ENCODE measurements at regions of chr9 and their contacts with region 1.

Region 1: GRCh38 chr9:93154315-93154903 is 20.4 kb upstream of the NINJ1 start:
- DNase-seq: no peak
- H3K4me3 ChIP-seq: no peak overlapping the region
- H3K27ac ChIP-seq: no peak overlapping the region
- H3K4me1 ChIP-seq: no peaks in the 10 kb centered on the region
- H3K27me3 ChIP-seq: no peaks in the 10 kb centered on the region
- CTCF ChIP-seq: peak in 2 of 4 experiments; percentile 26 to 55
- EP300 ChIP-seq: no peak
- POLR2A ChIP-seq: no peak

Region 2: GRCh38 chr9:92970467-92970923 is 183.9 kb before region 1 on chr9:
- intact Hi-C with region 1: no loop called
- DNase-seq: no peak
- H3K4me3 ChIP-seq: no peak overlapping the region
- H3K27ac ChIP-seq: no peak overlapping the region
- H3K4me1 ChIP-seq: no peaks in the 10 kb centered on the region
- H3K27me3 ChIP-seq: no peaks in the 10 kb centered on the region
- CTCF ChIP-seq: no peak
- EP300 ChIP-seq: no peak
- POLR2A ChIP-seq: no peak

Region 3: DNA sequence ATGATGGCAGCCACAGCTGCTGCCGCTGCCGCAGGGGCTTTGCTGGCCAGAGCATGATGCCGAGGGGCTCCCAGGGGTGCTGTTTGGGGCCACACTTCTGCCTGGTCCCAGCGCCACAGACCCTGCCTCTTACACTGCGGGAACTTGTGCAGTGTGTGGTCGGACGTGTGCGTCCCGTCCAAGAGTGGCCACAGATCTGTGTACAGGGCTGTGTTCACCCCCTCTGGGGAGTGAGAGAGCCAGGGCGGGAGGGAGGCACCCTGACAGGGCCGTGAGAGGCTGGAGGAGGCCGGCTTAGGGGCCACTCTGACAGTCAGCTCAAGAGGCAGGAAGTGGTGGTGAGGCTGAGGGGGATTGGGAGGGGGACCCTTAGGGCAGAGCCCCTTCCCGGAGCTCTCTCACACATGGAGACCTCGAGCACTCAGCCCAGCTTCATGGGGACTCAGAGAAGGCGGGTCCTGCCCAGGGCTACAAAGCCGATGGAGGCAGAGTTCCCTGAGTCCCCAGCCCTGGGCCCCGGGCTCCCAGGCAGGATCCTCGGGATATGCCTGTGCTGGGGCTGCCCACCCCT is 71.5 kb before region 1 on chr9:
- intact Hi-C with region 1: no loop called
- DNase-seq: peak; percentile 46
- H3K4me3 ChIP-seq: no peak overlapping the region
- H3K27ac ChIP-seq: no peak overlapping the region
- H3K4me1 ChIP-seq: no peaks in the 10 kb centered on the region
- H3K27me3 ChIP-seq: no peaks in the 10 kb centered on the region
- CTCF ChIP-seq: no peak
- EP300 ChIP-seq: no peak
- POLR2A ChIP-seq: no peak

Region 4: GRCh38 chr9:93111371-93112115 is 42.9 kb before region 1 on chr9:
- intact Hi-C with region 1: loop called (anchors 5 kb)
- DNase-seq: peak; percentile 63
- H3K4me3 ChIP-seq: no peak overlapping the region
- H3K27ac ChIP-seq: no peak overlapping the region
- H3K4me1 ChIP-seq: peaks cover 0 to 7% (median 3%) of the 10 kb centered on the region in 4 donors
- H3K27me3 ChIP-seq: no peaks in the 10 kb centered on the region
- CTCF ChIP-seq: no peak
- EP300 ChIP-seq: no peak
- POLR2A ChIP-seq: no peak

Measured in sigmoid colon (tissue), 7 donors.